ENCODE measurements at regions of chrX and their contacts with region 1.

Region 1: GRCh38 chrX:37825209-37825842 is 22.0 kb downstream of the DYNLT3 start:
- DNase-seq: peak; percentile 72
- H3K4me3 Mint-ChIP-seq: no peak overlapping the region
- H3K27ac Mint-ChIP-seq: no peak overlapping the region
- H3K4me1 Mint-ChIP-seq: peaks cover 19% of the 10 kb centered on the region
- H3K27me3 Mint-ChIP-seq: no peaks in the 10 kb centered on the region

Region 2: GRCh38 chrX:37420179-37420578 is 405.1 kb before region 1 on chrX:
- CTCF ChIA-PET with region 1: no interaction called
- intact Hi-C with region 1: no loop called
- DNase-seq: no peak
- H3K4me3 Mint-ChIP-seq: no peak overlapping the region
- H3K27ac Mint-ChIP-seq: no peak overlapping the region
- H3K4me1 Mint-ChIP-seq: no peaks in the 10 kb centered on the region
- H3K27me3 Mint-ChIP-seq: no peaks in the 10 kb centered on the region

Region 3: DNA sequence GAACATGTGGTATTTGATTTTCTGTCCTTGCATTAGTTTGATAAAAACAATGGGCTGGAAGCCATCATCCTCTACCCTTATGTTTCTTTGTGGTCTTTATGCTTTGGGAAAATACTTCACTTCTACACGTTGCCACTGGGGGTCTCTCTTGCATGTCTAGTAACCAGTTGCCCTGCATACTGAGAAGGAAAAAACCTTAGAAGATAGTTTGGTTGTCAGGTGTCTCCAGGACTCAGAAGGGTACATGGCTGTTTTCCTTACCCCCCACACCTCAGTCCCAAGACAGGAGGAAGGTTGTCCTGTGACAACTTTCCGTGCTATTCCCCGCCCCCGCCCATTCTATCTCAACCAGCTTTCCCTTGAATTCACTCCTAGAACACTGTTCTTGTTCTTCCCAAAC is 316.0 kb before region 1 on chrX:
- CTCF ChIA-PET with region 1: no interaction called
- intact Hi-C with region 1: loop called (anchors 5 kb)
- DNase-seq: no peak
- H3K4me3 Mint-ChIP-seq: no peak overlapping the region
- H3K27ac Mint-ChIP-seq: no peak overlapping the region
- H3K4me1 Mint-ChIP-seq: no peaks in the 10 kb centered on the region
- H3K27me3 Mint-ChIP-seq: no peaks in the 10 kb centered on the region

Region 4: DNA sequence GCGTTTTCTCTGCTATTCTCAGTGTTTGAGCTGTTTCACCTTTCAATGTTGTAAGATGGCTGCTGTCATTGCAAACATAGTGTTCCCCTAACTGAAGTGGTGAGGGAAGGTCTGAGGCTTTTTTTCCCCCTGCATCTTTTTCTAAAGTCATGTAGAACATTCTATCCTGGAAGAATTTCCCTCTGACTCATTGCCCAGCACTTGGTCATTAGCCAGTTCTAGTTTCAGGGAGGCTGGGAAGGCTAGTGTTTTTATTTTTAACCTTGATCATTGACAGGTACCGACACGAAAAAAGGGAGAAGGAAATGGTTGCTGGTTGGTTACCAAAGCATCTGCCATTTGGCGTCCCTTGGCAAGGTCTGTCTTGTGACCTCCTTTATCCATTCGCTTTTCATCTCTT is 247.3 kb before region 1 on chrX:
- CTCF ChIA-PET with region 1: no interaction called
- intact Hi-C with region 1: loop called (anchors 2 kb)
- DNase-seq: no peak
- H3K4me3 Mint-ChIP-seq: no peak overlapping the region
- H3K27ac Mint-ChIP-seq: no peak overlapping the region
- H3K4me1 Mint-ChIP-seq: no peaks in the 10 kb centered on the region
- H3K27me3 Mint-ChIP-seq: peaks cover 12% of the 10 kb centered on the region

Region 5: GRCh38 chrX:37776283-37776986 is 48.9 kb before region 1 on chrX:
- CTCF ChIA-PET with region 1: interaction called, 3 read pairs
- intact Hi-C with region 1: loop called (anchors 5 kb)
- DNase-seq: peak; percentile 27
- H3K4me3 Mint-ChIP-seq: no peak overlapping the region
- H3K27ac Mint-ChIP-seq: no peak overlapping the region
- H3K4me1 Mint-ChIP-seq: peaks cover 20% of the 10 kb centered on the region
- H3K27me3 Mint-ChIP-seq: no peaks in the 10 kb centered on the region

Region 6: GRCh38 chrX:38166478-38167083 is 341.3 kb after region 1 on chrX:
- CTCF ChIA-PET with region 1: no interaction called
- intact Hi-C with region 1: loop called (anchors 5 kb)
- DNase-seq: peak; percentile 27
- H3K4me3 Mint-ChIP-seq: no peak overlapping the region
- H3K27ac Mint-ChIP-seq: no peak overlapping the region
- H3K4me1 Mint-ChIP-seq: no peaks in the 10 kb centered on the region
- H3K27me3 Mint-ChIP-seq: no peaks in the 10 kb centered on the region

Measured in activated naive CD4-positive, alpha-beta T cell treated with anti-CD3 and anti-CD28 coated beads for 36 hours (primary cell).